Ascending aorta (tissue), 2 donors: ENCODE measurements at regions of chr7 and their contacts with region 1.

Region 1: DNA sequence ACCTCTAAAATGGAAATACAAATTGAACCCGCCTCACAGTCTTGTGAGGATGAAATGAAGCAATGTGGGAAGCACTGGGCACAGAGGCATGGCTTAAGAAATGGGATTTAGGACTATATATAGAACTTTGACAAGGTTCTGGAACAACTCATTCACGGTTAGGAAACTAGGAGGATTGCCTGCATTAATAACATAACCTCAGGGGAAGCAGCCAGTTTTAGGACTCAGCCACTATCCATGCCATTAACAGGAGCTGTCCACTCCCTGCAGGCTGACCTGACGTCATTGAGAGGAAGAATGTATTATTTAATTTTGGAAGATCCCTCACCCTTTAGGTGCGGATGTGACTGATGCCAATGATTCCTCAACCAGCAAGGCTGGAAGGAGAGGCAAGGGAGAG is 34.8 kb downstream of the ITGB8 start:
- DNase-seq: no peak
- H3K4me3 ChIP-seq: no peak overlapping the region
- H3K27ac ChIP-seq: peak overlapping the region in 1 of 2 donors; percentile 23
- H3K4me1 ChIP-seq: peaks cover 0 to 8% of the 10 kb centered on the region in 2 donors
- H3K27me3 ChIP-seq: no peaks in the 10 kb centered on the region
- CTCF ChIP-seq: no peak

Region 2: DNA sequence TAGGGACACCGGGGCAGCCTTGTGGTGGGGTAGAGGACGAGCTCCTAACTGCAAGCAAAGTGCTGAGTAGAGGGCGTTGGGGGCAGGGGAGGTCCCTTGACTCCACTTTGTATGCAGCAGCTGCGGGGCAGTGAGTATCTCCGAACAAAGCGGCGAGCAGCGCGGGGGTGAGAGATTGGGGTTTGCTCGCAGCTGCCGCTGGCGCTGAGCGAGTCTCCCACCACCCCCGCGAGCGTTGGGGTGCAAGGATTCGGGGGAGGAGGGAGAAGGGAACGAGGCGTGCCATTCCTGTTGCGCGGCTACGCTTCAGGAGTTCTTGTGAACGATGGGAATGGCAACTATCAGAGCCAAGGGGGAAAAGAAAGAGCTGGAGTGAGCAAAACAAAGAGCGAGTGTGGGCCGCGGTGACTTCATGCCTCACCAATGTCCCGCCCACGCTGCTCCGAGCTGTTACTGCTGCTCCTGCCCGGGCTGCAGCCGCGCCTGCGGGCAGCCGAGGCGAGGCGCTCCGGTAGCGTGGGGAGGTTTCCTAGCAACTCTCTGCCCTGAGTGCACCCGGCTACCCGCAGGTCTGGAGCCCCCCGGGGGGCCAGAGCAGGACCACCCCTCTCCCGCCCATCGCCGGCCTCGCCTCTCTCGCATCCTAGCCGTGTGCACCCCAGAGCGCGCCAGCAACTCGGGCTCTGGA is 35.1 kb before region 1 on chr7 and contains the start of gene ITGB8:
- intact Hi-C with region 1: loop called (anchors 5 kb)
- DNase-seq: peak; percentile 33 to 89
- H3K4me3 ChIP-seq: peak within 1 kb of the TSS; percentile 76 to 87
- H3K27ac ChIP-seq: peak within 1 kb of the TSS; percentile 83 to 86
- H3K4me1 ChIP-seq: peaks cover 0 to 2% of the 10 kb centered on the region in 2 donors
- H3K27me3 ChIP-seq: no peaks in the 10 kb centered on the region
- CTCF ChIP-seq: no peak
- total RNA-seq, gene ITGB8: 7.9 TPM